ENCODE measurements at regions of chrX and their contacts with region 1.

Region 1: GRCh38 chrX:43741843-43742573 is 85.9 kb downstream of the MAOA start:
- DNase-seq: no peak
- H3K4me3 ChIP-seq: no peak overlapping the region
- H3K27ac ChIP-seq: no peak overlapping the region
- H3K4me1 ChIP-seq: no peaks in the 10 kb centered on the region
- H3K27me3 ChIP-seq: no peaks in the 10 kb centered on the region
- CTCF ChIP-seq: no peak
- POLR2A ChIP-seq: no peak

Region 2: DNA sequence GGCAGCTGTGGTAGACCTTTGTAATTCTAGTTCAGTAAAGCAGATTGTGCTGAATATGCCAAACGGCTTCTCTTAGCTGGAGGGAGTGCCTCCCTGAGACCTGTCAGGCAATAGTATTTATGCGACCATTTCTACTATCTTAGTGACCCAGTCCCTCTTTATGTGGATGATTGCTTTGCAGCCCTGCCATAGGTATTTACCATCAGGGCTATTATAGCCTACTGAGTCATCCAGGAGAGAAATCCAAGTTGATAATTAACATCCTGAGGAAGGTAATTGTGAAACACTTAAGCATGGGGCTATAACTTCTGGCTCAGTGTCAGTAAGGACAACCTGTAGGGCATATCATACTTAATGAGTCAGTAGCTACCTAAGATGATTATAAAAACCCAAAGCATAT is 189.9 kb before region 1 on chrX:
- intact Hi-C with region 1: loop called (anchors 5 kb)
- DNase-seq: no peak
- H3K4me3 ChIP-seq: no peak overlapping the region
- H3K27ac ChIP-seq: no peak overlapping the region
- H3K4me1 ChIP-seq: no peaks in the 10 kb centered on the region
- H3K27me3 ChIP-seq: peaks cover under 1% of the 10 kb centered on the region
- CTCF ChIP-seq: no peak
- POLR2A ChIP-seq: no peak

Region 3: GRCh38 chrX:43581888-43582515 is 160.0 kb before region 1 on chrX:
- intact Hi-C with region 1: no loop called
- DNase-seq: no peak
- H3K4me3 ChIP-seq: no peak overlapping the region
- H3K27ac ChIP-seq: no peak overlapping the region
- H3K4me1 ChIP-seq: no peaks in the 10 kb centered on the region
- H3K27me3 ChIP-seq: no peaks in the 10 kb centered on the region
- CTCF ChIP-seq: no peak
- POLR2A ChIP-seq: no peak

Region 4: DNA sequence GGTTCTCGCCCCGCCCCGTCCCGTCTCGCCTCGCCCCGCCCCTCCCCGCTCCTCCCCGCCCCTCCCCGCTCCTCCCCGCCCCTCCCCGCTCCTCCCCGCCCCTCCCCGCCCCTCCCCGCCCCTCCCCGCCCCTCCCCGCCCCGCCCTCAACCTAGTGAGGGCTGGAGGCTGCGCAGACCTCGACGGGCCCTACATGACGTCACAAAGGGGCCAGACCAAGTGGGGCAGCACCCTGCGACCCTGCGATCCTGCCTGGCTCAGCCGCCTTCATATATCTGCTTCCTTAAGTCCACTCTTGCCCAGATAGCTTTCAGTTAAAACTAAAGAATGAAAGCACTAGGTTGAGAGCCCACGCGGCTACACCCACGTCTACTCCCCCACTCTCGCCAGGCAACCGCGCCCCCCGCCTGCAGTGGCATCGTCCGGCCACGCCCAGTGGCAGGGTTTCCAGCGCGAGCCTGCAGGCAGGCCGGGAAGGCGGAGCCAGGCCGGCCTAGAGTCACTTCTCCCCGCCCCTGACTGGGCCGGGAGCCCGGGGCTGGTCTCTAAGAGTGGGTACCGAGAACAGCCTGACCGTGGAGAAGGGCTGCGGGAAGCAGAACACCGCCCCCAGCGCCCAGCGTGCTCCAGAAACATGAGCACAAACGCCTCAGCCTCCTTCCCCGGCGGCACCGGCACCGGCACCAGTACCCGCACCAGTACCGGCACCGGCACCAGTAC is 87.4 kb before region 1 on chrX:
- intact Hi-C with region 1: loop called (anchors 10 kb)
- DNase-seq: peak in 1 of 2 donors; percentile 94
- H3K4me3 ChIP-seq: peak overlapping the region; percentile 65 to 67
- H3K27ac ChIP-seq: peak overlapping the region; percentile 85
- H3K4me1 ChIP-seq: no peaks in the 10 kb centered on the region
- H3K27me3 ChIP-seq: no peaks in the 10 kb centered on the region
- CTCF ChIP-seq: no peak
- POLR2A ChIP-seq: peak in 1 of 2 donors; percentile 83

Measured in vagina (tissue), 2 donors.